Mammary epithelial cell (primary cell): ENCODE measurements at regions of chr5 and their contacts with region 1.

Region 1: GRCh38 chr5:87151547-87151946 is 116.1 kb upstream of the RASA1 start:
- DNase-seq: peak; percentile 91
- H3K4me3 ChIP-seq: no peak overlapping the region
- H3K27ac ChIP-seq: peak overlapping the region; percentile 67
- H3K4me1 ChIP-seq: peaks cover 29% of the 10 kb centered on the region
- H3K27me3 ChIP-seq: no peaks in the 10 kb centered on the region
- CTCF ChIP-seq: no peak

Region 2: GRCh38 chr5:87121304-87122150 is 30.0 kb before region 1 on chr5:
- CTCF ChIA-PET with region 1: no interaction called
- dilution Hi-C with region 1: no loop called
- in situ Hi-C with region 1: no loop called
- intact Hi-C with region 1: loop called (anchors 1 kb)
- DNase-seq: peak; percentile 88
- H3K4me3 ChIP-seq: peak overlapping the region in 2 of 3 experiments; percentile 19 to 24
- H3K27ac ChIP-seq: peak overlapping the region; percentile 96
- H3K4me1 ChIP-seq: peaks cover 63% of the 10 kb centered on the region
- H3K27me3 ChIP-seq: no peaks in the 10 kb centered on the region
- CTCF ChIP-seq: no peak

Region 3: DNA sequence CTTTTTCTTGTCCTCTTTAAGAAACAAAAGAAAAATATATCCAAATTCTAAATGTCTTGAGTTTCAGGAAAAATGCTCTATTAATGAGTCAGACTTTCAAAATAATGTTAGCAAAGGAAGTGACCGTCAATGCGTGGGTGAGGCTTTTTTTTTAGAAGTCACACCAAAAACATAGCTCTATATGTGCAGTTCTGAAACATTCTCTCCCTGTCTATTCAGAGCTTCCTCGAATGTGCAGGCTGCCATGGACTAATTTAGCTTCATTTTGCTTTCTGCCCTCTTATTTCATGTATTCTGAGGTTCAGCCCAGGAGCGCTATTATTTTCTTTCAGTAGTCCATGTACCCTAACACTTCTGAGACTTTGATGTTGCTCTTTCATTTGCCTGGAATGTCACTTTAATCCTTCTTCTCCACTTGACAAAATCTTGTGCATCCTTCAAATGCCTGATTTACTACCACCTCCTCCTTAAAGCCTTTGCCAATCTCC is 43.6 kb after region 1 on chr5:
- CTCF ChIA-PET with region 1: no interaction called
- dilution Hi-C with region 1: no loop called
- in situ Hi-C with region 1: no loop called
- intact Hi-C with region 1: no loop called
- DNase-seq: peak; percentile 53
- H3K4me3 ChIP-seq: peak overlapping the region in 1 of 3 experiments; percentile 12
- H3K27ac ChIP-seq: peak overlapping the region; percentile 27
- H3K4me1 ChIP-seq: peaks cover 26% of the 10 kb centered on the region
- H3K27me3 ChIP-seq: no peaks in the 10 kb centered on the region
- CTCF ChIP-seq: no peak

Region 4: DNA sequence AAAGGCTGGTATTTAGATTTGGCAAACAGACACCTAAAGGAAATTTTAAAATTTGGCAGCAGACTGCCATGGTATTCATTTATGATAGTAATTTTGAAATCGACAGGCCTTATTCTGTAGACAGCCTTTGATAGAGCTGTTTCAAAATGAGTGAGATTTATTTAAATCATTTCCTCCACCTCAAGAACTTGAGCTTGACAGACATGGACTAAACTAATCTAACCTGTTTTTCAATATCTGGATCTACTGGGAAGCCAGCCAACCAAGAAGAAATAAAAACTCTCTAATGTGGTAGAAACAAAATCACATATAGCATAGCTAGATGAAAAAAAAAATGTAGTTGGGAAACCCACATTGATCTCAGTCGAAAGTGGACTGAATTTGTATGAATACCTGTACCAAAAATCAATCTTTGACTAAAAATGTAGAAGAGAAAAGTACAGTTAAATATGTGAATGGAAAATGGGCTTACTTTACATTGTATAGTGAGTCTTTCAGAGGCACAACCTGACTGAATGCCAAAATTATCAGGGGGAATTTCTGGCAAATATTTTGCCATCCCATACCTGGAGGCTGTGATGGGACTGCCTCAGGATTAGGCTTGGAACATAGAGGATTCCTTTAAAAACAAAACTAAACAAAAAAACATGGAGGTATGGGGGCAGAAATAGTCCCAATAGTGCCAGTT is 59.3 kb after region 1 on chr5:
- CTCF ChIA-PET with region 1: no interaction called
- dilution Hi-C with region 1: loop called (anchors 5 kb)
- in situ Hi-C with region 1: no loop called
- intact Hi-C with region 1: no loop called
- DNase-seq: peak; percentile 82
- H3K4me3 ChIP-seq: peak overlapping the region in 1 of 3 experiments; percentile 7
- H3K27ac ChIP-seq: no peak overlapping the region
- H3K4me1 ChIP-seq: peaks cover 16% of the 10 kb centered on the region
- H3K27me3 ChIP-seq: no peaks in the 10 kb centered on the region
- CTCF ChIP-seq: no peak